ENCODE measurements at regions of chr3 and their contacts with region 1.

Region 1: DNA sequence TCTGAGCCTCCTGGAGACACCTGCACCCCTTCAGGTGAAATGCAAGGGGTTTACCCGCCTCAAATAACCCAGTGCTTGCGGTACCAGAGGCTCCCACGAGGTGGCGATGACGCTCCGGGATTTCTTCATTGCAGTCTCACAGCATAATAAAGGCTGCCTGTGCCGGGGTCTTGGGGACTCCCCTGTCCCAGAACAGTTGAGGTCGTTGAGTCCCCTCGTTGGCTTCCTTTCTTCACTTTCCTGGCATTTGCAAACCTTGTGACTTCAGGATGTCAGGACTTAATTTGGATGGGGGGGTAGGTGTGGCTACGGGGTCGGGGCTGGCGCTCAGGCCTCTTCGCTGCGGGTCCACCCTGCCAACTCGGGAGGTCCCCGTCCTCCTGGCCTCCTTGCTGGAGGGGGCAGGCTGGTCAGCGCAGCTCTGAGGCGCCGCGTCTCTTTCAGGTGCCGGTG is 1.3 kb downstream of the GNAT1 start:
- DNase-seq: peak; percentile 87
- ATAC-seq: peak; percentile 45
- H3K4me3 Mint-ChIP-seq: no peak overlapping the region
- H3K27ac Mint-ChIP-seq: no peak overlapping the region
- H3K4me1 Mint-ChIP-seq: peaks cover 16% of the 10 kb centered on the region
- H3K27me3 Mint-ChIP-seq: peaks cover 16% of the 10 kb centered on the region

Region 2: GRCh38 chr3:49839193-49839809 is 353.4 kb before region 1 on chr3:
- CTCF ChIA-PET with region 1: no interaction called
- POLR2A ChIA-PET with region 1: no interaction called
- DNase-seq: peak; percentile 88
- ATAC-seq: peak; percentile 90
- H3K4me3 Mint-ChIP-seq: no peak overlapping the region
- H3K27ac Mint-ChIP-seq: peak overlapping the region; percentile 30
- H3K4me1 Mint-ChIP-seq: peaks cover 1% of the 10 kb centered on the region
- H3K27me3 Mint-ChIP-seq: no peaks in the 10 kb centered on the region

Region 3: DNA sequence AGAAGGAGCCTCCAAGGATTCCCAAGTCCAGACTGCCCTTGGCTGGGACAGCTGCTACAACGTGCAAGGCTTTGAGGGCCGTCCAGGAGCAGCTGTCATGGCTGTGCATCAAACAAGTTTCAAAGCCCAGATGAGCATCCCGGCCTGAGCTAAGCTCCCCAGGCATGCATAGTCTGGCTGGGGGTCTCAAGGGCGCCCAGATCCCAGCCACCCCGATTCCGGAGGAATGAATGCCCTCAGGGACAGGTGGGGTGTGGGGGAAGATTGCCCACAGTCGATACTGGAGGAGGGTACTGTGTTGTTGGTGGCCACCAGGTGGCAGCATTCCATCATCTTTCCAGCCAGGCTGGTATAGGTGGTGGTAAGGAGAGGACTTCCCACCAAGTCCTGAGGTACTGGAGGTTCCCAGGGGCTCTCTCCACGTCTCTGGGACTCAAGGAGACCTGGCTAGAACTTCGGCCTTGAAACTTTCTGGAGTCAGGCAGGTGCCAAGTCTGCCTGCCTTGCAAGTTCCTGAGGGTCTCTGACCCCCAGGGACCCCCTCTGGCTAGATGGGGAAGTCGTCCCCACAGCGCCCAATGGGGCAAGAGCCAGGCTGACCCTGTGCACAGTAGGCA is 71.2 kb before region 1 on chr3:
- CTCF ChIA-PET with region 1: interaction called, 23 read pairs
- POLR2A ChIA-PET with region 1: interaction called, 4 read pairs
- DNase-seq: peak; percentile 81
- ATAC-seq: peak; percentile 86
- H3K4me3 Mint-ChIP-seq: no peak overlapping the region
- H3K27ac Mint-ChIP-seq: no peak overlapping the region
- H3K4me1 Mint-ChIP-seq: no peaks in the 10 kb centered on the region
- H3K27me3 Mint-ChIP-seq: no peaks in the 10 kb centered on the region

Region 4: DNA sequence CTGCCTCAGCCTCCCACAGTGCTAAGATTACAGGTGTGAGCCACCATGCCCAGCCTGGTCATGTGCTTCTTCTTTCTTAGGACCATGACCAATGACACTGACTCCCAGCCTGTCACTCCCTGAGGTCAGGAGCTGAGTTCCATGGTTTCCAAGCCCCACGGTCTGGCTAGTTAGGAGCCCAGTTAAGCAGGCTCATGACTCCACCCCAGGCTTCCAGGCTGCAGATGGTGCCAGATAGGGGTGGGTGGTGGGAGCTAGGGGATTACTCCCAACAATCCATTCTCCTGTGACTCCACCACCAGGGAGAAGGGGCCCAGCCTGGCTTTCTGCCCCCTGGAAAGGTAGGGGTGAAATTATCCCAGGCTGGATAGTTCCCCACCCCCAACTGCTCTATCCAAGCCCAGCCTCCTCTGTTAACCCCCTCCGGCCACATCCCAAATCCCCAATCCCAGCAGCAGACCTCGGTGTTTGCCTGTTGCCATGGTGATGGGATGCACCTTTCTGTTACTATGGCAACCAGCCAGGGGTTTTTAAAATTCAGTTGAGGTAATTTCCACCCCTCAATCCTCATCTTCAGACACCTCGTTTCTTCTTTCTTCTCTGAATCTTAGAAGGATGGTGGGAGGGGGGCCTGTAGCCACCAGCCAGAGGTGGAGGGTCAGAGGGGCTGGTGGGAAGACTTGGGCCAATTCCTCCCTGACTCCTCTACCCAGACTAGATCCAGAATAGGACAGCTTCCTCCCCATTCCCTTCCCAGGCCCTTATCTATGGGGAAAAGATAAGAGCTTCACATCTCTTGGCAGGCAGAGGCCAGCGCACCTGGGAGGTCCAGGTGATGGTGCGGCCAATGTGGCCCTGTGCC is 60.1 kb before region 1 on chr3:
- CTCF ChIA-PET with region 1: no interaction called
- POLR2A ChIA-PET with region 1: no interaction called
- DNase-seq: no peak
- ATAC-seq: no peak
- H3K4me3 Mint-ChIP-seq: no peak overlapping the region
- H3K27ac Mint-ChIP-seq: no peak overlapping the region
- H3K4me1 Mint-ChIP-seq: no peaks in the 10 kb centered on the region
- H3K27me3 Mint-ChIP-seq: no peaks in the 10 kb centered on the region

Region 5: GRCh38 chr3:50205414-50206276 is 12.9 kb after region 1 on chr3:
- CTCF ChIA-PET with region 1: interaction called, 24 read pairs
- POLR2A ChIA-PET with region 1: interaction called, 6 read pairs
- DNase-seq: peak; percentile 48
- ATAC-seq: peak; percentile 64
- H3K4me3 Mint-ChIP-seq: no peak overlapping the region
- H3K27ac Mint-ChIP-seq: no peak overlapping the region
- H3K4me1 Mint-ChIP-seq: no peaks in the 10 kb centered on the region
- H3K27me3 Mint-ChIP-seq: peaks cover 44% of the 10 kb centered on the region

Region 6: GRCh38 chr3:50221411-50222168 is 28.9 kb after region 1 on chr3:
- CTCF ChIA-PET with region 1: interaction called, 185 read pairs
- POLR2A ChIA-PET with region 1: interaction called, 21 read pairs
- DNase-seq: no peak
- ATAC-seq: no peak
- H3K4me3 Mint-ChIP-seq: no peak overlapping the region
- H3K27ac Mint-ChIP-seq: peak overlapping the region; percentile 52
- H3K4me1 Mint-ChIP-seq: peaks cover 19% of the 10 kb centered on the region
- H3K27me3 Mint-ChIP-seq: peaks cover 16% of the 10 kb centered on the region

Region 7: DNA sequence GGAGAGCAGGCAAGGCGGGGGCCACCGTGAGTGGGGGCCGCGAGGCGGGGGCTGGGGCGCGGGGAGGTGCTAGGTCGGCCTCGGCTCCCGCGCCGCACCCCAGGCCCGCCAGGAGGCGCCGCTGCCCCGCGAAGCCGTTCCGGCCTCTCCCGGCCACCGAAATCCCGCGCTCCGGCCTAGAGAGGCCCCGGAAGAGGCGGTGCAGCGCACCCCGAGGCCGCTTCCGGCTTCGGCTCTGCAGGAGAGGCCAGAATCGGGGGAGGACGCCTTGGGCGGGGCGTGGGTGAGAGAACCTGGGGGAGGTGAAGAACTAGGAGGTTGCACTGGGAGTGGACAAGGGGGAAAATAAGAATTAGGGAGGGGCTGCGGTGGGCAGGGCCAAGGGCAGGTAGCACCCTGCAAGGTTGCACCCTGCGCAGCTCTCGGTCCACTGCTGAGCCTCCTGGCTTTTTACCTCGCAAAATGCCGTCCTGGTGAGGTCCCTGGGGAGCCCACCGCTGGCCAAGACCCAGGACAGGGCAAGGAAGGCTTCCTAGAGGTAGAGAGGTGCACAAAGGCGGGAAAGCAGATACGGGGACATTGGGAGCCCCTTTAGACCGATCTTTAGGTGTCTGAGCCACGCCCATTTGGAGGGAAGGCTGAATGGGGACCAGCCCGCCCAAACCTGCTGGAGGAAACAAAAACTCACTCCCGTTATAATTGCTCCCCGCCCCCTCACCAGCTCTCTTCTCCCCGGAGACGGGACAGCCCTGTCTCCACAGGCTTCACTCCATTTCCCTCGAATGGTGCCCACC is 34.9 kb after region 1 on chr3:
- CTCF ChIA-PET with region 1: interaction called, 185 read pairs
- POLR2A ChIA-PET with region 1: interaction called, 21 read pairs
- DNase-seq: peak; percentile 94
- ATAC-seq: peak; percentile 89
- H3K4me3 Mint-ChIP-seq: peak overlapping the region; percentile 91
- H3K27ac Mint-ChIP-seq: peak overlapping the region; percentile 90
- H3K4me1 Mint-ChIP-seq: peaks cover 34% of the 10 kb centered on the region
- H3K27me3 Mint-ChIP-seq: peaks cover 16% of the 10 kb centered on the region

Region 8: DNA sequence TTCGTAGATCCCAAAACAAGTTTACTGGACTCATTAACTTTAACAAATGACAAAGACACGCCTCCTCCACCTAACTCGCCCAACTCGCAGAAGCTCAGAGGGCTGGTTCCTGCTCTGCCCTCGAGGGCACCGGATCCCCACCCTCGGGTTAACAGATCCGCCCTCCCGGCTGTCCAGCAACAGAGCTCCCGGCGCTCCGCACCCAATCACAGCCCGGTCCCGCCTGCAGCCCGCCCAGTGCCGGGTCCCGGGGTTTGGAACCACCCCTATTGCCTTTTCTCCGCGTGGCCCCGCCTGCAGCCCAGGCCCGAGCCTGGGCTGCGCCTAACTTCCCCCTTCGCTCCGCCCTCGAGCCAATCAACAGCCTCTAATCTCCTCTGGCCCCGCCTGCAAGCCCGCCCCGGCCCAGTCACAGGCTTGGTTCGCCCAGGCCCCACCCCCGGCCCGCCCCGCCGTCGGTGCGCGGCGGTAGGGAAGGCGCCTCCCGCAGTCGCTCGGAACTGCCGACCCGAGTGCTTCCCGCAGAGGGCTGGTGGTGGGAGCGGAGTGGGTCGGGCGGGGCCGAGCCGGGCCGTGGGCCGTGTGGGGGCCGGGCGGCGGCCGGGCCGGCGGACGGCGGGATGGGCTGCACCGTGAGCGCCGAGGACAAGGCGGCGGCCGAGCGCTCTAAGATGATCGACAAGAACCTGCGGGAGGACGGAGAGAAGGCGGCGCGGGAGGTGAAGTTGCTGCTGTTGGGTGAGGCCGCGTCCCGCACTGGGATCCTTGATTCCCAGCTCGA is 43.2 kb after region 1 on chr3 and contains the start of gene GNAI2:
- CTCF ChIA-PET with region 1: interaction called, 13 read pairs
- POLR2A ChIA-PET with region 1: interaction called, 3 read pairs
- DNase-seq: peak; percentile 99
- ATAC-seq: peak; percentile 94
- H3K4me3 Mint-ChIP-seq: peak within 1 kb of the TSS; percentile 99
- H3K27ac Mint-ChIP-seq: peak within 1 kb of the TSS; percentile 93
- H3K4me1 Mint-ChIP-seq: peaks cover 42% of the 10 kb centered on the region
- H3K27me3 Mint-ChIP-seq: no peaks in the 10 kb centered on the region
- total RNA-seq, gene GNAI2: 515 to 531 TPM

Region 9: DNA sequence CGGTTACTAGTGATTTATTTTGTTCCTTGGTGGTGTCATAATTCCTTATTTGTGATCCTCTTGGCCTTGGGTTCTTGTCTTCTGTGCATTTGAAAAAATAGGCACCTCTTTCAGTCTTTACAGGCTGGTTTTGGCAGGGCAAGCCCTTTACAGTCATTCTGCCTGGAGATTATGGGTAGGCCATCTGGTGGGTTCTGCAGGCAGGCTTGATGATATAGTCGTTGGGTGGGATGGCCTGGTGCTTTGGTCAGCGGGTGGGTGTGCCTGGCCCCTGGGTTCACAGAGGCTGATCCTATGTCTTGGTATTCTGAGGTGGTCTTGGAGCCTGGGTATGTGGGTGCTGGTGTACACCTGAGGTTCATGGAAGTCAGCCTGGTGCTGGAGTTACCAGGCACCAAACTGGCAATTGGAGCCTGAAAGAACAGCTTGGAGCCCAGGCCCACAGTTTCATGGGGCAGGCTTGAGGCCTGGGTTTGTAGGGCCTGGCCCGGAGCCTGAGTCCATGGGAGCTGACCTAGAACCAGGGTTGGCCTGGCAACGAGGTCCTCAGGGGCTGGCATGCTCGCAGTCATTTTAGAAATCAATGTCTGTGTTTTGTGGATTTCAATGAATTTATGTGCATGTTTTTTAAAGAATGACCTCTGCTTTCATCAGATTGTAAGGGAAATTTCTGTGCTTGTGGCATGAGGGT is 545.3 kb after region 1 on chr3:
- CTCF ChIA-PET with region 1: no interaction called
- POLR2A ChIA-PET with region 1: no interaction called
- DNase-seq: no peak
- ATAC-seq: no peak
- H3K4me3 Mint-ChIP-seq: no peak overlapping the region
- H3K27ac Mint-ChIP-seq: no peak overlapping the region
- H3K4me1 Mint-ChIP-seq: no peaks in the 10 kb centered on the region
- H3K27me3 Mint-ChIP-seq: no peaks in the 10 kb centered on the region